Activated T-helper 1 cell treated with anti-CD3 and anti-CD28 coated beads, Interleukin-12 subunit alpha, Interleukin-12 subunit beta, Interleukin-2, Interleukin-4 antibody, amounts not matched to agents 30 ng/mL and 10 ng/mL and 1 ng/mL, durations not matched to agents 14 hours and 24 hours and 36 hours (primary cell): ENCODE measurements at regions of chrX and their contacts with region 1.

Region 1: DNA sequence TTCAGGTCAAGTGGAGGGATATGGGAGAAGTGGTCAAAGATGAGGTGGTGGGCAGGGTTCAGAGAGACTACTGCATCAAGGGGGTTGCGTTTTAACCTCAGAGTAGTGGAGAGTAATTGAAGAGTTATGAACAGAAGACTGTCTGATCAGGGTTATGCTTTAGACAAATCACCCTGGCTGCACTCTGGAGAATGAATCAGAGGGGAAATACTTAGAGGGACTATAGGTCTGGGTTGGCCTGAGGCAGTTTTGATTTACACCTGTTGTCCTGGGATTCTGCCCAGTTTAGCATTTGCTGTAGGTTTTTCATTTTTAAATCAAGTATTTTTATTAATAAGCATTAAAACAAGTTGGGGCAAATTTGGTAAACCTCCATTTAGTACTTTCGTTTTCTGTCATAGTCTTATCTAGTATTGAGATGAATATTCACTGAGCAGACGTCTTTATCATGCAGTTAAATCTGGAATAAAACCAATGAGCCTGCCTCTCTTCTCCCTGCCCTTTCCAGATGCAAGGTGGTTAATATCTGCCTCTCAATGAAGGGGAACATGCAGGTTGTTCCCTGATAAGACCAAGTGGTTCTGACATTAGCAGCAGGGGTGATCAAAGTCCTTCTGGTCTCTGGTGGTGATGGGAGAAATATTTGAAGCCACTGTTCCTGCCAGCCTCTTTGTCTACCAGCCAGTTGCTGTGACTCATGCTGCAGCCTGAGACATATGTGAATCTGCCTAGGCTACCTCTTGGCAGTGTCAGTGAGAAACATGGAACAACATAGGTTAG is 116.0 kb upstream of the RPS6KA3 start:
- DNase-seq: no peak
- H3K4me3 Mint-ChIP-seq: no peak overlapping the region
- H3K27ac Mint-ChIP-seq: no peak overlapping the region
- H3K4me1 Mint-ChIP-seq: peaks cover 26% of the 10 kb centered on the region
- H3K27me3 Mint-ChIP-seq: no peaks in the 10 kb centered on the region

Region 2: GRCh38 chrX:20322887-20323286 is 59.8 kb before region 1 on chrX:
- intact Hi-C with region 1: no loop called
- DNase-seq: no peak
- H3K4me3 Mint-ChIP-seq: no peak overlapping the region
- H3K27ac Mint-ChIP-seq: no peak overlapping the region
- H3K4me1 Mint-ChIP-seq: peaks cover 15% of the 10 kb centered on the region
- H3K27me3 Mint-ChIP-seq: peaks cover 4% of the 10 kb centered on the region

Region 3: DNA sequence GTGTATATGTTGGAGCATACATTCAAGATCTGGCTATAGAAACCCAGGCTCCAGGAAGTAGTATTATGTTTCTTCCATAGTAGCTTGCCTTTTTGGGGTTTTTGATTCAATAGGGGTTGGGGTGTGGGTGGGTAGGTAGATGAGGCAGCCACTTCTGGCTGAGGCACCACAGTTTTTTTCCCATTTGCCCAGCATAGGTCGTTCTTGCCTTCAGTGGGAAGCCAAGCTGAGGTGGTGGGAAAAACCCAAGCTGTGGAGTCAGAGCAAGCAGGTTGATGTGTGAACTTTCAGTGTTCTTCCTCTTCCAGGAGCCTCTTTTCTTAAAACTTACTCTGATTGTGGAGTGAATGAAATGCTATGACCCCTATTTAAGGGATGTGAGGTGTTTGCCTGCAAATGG is 49.0 kb before region 1 on chrX:
- intact Hi-C with region 1: loop called (anchors 2 kb)
- DNase-seq: no peak
- H3K4me3 Mint-ChIP-seq: no peak overlapping the region
- H3K27ac Mint-ChIP-seq: no peak overlapping the region
- H3K4me1 Mint-ChIP-seq: peaks cover 14% of the 10 kb centered on the region
- H3K27me3 Mint-ChIP-seq: no peaks in the 10 kb centered on the region

Region 4: GRCh38 chrX:20352935-20353336 is 29.8 kb before region 1 on chrX:
- intact Hi-C with region 1: loop called (anchors 2 kb)
- DNase-seq: no peak
- H3K4me3 Mint-ChIP-seq: no peak overlapping the region
- H3K27ac Mint-ChIP-seq: no peak overlapping the region
- H3K4me1 Mint-ChIP-seq: peaks cover 5% of the 10 kb centered on the region
- H3K27me3 Mint-ChIP-seq: peaks cover 3% of the 10 kb centered on the region

Region 5: DNA sequence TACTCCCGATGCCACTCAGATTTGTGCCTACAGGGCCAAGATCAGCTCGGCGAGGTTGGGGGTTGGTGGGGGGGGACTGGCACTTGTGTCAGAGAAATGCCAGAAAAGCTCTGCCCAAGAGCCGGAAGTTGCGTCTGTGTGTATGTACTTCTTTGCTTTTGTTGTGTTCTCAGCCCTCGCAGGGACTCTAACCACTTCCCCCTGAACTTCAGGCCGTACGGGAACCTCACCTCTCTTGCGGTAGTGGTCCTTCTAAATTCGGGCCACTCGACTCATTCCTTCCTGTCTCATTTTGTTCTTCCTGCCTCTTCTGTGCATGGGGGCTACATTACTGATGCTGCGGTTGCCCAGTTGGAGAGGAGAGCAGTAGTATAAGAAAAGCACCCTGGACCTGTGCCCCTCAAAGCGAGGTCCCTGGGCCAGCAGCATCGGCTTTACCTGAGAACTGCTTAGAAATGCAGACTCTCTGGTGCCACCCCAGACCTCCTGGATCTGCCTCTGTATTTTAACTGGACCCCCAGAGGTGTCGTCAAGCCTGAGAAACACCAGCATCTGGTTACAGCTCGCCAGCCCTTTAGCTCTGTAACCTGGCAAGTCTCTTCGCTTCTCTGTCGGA is 30.3 kb after region 1 on chrX:
- intact Hi-C with region 1: loop called (anchors 2 kb)
- DNase-seq: peak; percentile 35
- H3K4me3 Mint-ChIP-seq: peak overlapping the region; percentile 8
- H3K27ac Mint-ChIP-seq: peak overlapping the region; percentile 89
- H3K4me1 Mint-ChIP-seq: peaks cover 28% of the 10 kb centered on the region
- H3K27me3 Mint-ChIP-seq: no peaks in the 10 kb centered on the region